Lower lobe of right lung (tissue), 2 donors: ENCODE measurements at regions of chr16 and their contacts with region 1.

Region 1: GRCh38 chr16:58129097-58129936 is at the start of gene CFAP20:
- DNase-seq: peak; percentile 99
- ATAC-seq: peak; percentile 98 to 99
- H3K4me3 ChIP-seq: peak within 1 kb of the TSS; percentile 76
- H3K27ac ChIP-seq: peak within 1 kb of the TSS; percentile 85
- H3K4me1 ChIP-seq: peaks cover 34% of the 10 kb centered on the region
- H3K27me3 ChIP-seq: no peaks in the 10 kb centered on the region
- CTCF ChIP-seq: no peak
- total RNA-seq, gene CFAP20: 21.7 TPM

Region 2: DNA sequence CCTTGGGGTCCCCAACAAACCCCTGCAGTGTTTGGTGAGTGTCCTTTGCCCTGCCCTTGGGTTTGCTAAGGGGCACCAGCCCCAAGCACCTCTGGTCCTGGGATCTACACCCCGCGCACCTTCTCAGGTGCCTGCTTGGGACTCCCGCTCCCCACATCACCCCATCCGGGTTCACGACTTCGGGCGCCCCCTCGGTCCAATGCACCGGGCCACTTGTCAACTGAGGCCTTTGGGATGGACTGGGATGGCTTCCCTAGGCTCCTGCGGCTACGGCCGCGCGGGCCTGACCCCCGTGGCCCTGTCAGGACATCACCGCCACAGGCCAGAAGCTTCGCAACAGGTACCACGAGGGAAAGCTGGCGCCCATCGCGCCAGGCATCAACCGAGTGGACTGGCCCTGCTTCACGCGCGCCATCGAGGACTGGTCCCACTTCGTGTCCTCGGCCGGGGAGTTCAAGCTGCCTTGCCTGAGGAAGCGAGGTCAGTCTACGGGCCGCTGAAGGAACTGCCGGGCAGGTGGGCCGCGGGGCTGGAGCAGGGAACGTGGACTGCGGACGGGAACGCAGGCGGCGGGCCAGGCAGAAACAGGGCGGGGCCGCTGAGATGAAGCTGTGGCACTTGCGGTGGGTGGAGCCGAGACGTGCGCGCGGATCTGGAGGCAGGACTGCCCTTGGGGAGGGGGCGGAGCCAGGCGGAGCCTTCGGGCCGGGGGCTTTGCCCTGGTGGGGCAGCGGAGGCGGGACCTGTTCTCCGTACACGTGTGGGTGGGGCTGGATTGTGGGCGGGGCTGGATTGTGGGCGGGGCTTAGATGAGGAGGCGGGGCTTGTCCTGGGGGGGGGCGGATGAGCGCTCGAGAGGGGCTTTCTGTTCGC is 144.8 kb before region 1 on chr16:
- intact Hi-C with region 1: no loop called
- DNase-seq: peak; percentile 94
- ATAC-seq: peak; percentile 98 to 99
- H3K4me3 ChIP-seq: peak overlapping the region; percentile 67
- H3K27ac ChIP-seq: peak overlapping the region; percentile 44
- H3K4me1 ChIP-seq: peaks cover 16% of the 10 kb centered on the region
- H3K27me3 ChIP-seq: no peaks in the 10 kb centered on the region
- CTCF ChIP-seq: no peak

Region 3: GRCh38 chr16:58025351-58026138 is 103.8 kb before region 1 on chr16 and contains the start of gene MMP15:
- intact Hi-C with region 1: loop called (anchors 10 kb)
- DNase-seq: peak; percentile 94
- ATAC-seq: peak; percentile 86 to 87
- H3K4me3 ChIP-seq: peak within 1 kb of the TSS; percentile 81
- H3K27ac ChIP-seq: peak within 1 kb of the TSS; percentile 87
- H3K4me1 ChIP-seq: peaks cover 88% of the 10 kb centered on the region
- H3K27me3 ChIP-seq: no peaks in the 10 kb centered on the region
- CTCF ChIP-seq: no peak
- total RNA-seq, gene MMP15: 21.5 TPM